Cardiac septum (tissue), 1 donor: ENCODE measurements at regions of chr16 and their contacts with region 1.

Region 1: GRCh38 chr16:58392215-58393137 is at the start of gene GINS3:
- DNase-seq: peak; percentile 93
- total RNA-seq, gene GINS3: 4.7 TPM

Region 2: DNA sequence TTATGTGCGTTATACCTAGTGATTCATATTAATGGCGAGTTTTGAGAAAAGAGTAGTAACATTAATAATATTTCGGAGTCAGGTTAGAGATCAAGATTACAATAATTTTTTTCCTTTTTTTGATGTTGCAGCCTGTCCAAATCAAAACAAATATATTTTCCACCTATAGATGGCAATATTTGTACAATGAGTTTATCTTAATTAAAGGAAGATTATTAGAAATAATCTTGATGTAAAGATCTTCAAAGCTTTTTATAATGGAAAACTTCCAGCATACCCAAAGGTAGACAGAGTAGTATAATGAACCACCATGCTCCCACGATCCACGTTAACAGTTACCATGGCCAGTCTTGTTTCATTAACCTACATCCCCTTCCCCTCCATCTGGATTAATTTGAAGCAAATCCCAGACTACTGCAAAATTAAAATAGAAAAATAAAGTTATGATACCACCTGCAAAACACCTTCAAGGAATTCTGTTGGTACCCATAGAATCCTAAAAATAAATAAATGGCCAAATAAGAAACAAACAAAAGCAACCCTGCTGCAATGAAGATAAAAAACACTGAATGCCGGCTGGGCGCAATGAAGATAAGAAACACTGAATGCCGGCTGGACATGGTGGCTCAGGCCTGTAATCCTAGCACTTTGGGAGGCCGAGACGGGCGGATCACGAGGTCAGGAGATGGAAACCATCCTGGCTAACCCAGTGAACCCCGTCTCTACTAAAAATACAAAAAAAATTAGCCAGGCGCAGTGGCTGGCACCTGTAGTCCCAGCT is 46.7 kb before region 1 on chr16:
- intact Hi-C with region 1: loop called (anchors 5 kb)
- DNase-seq: no peak

Region 3: GRCh38 chr16:58464047-58464915 is 71.8 kb after region 1 on chr16:
- intact Hi-C with region 1: loop called (anchors 5 kb)
- DNase-seq: no peak

Region 4: GRCh38 chr16:58629572-58630104 is 237.2 kb after region 1 on chr16 and contains the start of gene CNOT1:
- intact Hi-C with region 1: loop called (anchors 2 kb)
- DNase-seq: peak; percentile 98
- total RNA-seq, gene CNOT1: 85.6 TPM